Cardiac septum (tissue), 1 donor: ENCODE measurements at regions of chr19 and their contacts with region 1.

Region 1: DNA sequence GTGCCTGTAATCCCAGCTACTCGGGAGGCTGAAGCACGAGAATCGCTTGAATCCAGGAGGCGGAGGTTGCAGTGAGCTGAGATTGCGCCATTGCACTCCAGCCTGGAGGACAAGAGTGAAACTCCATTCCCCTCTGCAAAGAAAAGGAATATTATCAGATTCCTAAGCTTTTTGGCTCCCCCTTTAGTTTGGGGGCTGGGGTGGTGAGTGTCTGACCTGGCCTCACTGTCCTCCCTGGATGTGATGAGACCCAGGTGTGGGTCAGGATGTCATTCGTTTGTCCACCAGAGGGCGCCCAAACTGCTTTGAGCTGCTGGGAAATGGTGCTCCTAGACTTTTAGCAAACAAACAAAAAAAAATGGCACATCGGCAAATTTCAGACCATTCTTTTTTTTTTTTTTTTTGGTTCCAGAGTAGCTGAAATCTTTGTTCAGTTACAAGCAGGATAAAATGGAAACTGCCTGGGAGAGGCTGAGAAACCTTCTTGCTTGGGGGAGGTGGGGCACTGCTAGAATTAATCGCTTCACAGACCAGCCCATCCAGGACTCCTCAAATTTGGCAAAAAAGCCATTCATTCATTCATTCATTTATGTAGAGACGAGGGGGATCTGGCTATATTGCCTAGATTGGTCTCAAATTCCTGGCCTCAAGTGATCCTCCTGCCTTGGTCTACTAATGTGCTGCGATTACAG is 29.4 kb downstream of the SPC24 start:
- DNase-seq: peak; percentile 85

Region 2: GRCh38 chr19:10936661-10937084 is 189.5 kb before region 1 on chr19:
- intact Hi-C with region 1: loop called (anchors 5 kb)
- DNase-seq: no peak

Region 3: GRCh38 chr19:11035441-11036377 is 90.4 kb before region 1 on chr19:
- intact Hi-C with region 1: loop called (anchors 2 kb)
- DNase-seq: peak; percentile 94

Region 4: GRCh38 chr19:11064831-11065303 is 61.3 kb before region 1 on chr19:
- intact Hi-C with region 1: no loop called
- DNase-seq: no peak

Region 5: DNA sequence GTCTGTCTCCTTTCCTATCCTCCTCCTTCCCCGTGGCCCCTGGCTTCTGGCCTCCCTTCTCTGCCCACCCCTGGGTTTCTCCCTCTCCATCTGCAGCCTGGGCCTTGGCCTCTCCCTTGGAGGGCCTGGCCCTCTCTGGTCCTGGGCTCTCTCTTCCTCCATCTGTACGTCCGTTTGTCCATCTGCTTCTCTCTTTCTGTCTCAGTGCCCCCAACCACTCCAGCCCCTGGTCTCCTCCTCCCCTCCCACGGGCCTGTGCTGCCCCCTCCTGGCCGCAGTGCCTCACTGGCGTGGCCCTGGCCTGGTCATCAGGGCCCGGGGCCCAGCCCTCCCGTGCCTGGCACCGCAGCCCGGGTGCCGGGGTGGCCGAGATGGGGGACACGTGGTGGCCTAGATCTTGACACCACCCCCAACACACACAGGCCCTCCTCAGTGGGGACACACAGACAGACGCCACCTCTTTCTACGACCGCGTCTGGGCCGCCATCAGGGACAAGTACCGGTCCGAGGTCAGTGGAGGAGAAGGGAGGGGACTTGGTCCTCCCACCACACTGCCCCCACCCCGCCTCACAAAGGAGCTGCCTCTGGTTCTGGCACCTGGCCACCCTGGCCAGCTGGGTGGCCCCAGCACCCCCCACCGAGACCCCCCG is 320.6 kb after region 1 on chr19:
- intact Hi-C with region 1: loop called (anchors 10 kb)
- DNase-seq: no peak